HCT116 (cell line): ENCODE measurements at regions of chr1 and their contacts with region 1.

Region 1: DNA sequence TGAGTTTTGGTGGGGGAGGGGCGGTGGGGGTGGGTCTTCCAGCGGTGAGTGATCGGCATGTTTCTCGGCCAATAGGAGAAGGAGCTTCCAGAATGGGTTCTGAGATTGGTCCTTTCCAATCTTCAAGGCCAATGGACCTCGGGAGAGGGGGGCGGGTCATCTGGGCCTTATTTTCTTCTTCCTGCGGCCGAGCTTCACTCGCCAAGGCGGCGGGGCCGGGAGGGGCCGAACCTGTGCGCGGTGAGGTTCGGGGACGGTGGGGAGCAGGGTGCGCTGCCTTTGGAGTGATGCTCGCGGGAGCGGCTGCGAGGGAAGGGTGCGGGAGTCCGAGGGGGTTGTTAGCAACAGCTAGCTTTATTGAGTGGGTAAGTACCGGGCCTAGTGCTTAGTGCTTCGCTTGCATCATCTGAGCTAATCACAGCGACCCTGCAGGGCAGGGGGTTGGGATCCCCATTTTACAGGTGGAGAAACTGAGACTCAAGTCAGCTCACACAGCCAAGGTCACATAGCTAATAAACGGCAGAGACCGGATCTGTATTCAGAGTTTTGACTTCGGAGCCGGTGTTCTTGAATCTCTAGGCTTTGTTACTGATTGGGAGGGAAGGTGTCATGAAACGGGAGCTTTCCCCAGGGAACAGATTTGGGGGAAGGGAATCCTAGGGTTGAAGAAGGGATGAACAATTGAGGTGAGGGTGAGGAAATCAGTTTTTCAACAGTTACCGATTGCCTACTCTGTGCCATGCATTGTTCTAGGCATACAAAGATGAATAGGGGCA is 549 bp downstream of the KDM4A start:
- DNase-seq: peak; percentile 98
- ATAC-seq: peak; percentile 80
- H3K4me3 ChIP-seq: peak overlapping the region; percentile 62 to 86
- H3K27ac ChIP-seq: peak overlapping the region; percentile 83
- H3K4me1 ChIP-seq: peaks cover 7 to 26% of the 10 kb centered on the region in 2 experiments; a peak in 3 of 4 replicates
- H3K27me3 ChIP-seq: no peaks in the 10 kb centered on the region
- CTCF ChIP-seq: no peak
- POLR2A ChIP-seq: peak; percentile 99
- RAD21 ChIP-seq: no peak

Region 2: GRCh38 chr1:43529206-43529731 is 121.2 kb before region 1 on chr1:
- CTCF ChIA-PET with region 1: interaction called, 3 read pairs
- POLR2A ChIA-PET with region 1: interaction called, 8 read pairs
- RAD21 ChIA-PET with region 1: interaction called in 1 of 2 experiments, 3 read pairs
- intact Hi-C with region 1: loop called (anchors 2 kb)
- DNase-seq: peak; percentile 84
- ATAC-seq: peak; percentile 56
- H3K4me3 ChIP-seq: no peak overlapping the region
- H3K27ac ChIP-seq: no peak overlapping the region
- H3K4me1 ChIP-seq: peaks cover 26 to 71% of the 10 kb centered on the region in 2 experiments
- H3K27me3 ChIP-seq: no peaks in the 10 kb centered on the region
- CTCF ChIP-seq: peak in 2 of 3 experiments; percentile 94 to 97; a peak in 4 of 6 replicates
- POLR2A ChIP-seq: no peak
- RAD21 ChIP-seq: no peak

Region 3: DNA sequence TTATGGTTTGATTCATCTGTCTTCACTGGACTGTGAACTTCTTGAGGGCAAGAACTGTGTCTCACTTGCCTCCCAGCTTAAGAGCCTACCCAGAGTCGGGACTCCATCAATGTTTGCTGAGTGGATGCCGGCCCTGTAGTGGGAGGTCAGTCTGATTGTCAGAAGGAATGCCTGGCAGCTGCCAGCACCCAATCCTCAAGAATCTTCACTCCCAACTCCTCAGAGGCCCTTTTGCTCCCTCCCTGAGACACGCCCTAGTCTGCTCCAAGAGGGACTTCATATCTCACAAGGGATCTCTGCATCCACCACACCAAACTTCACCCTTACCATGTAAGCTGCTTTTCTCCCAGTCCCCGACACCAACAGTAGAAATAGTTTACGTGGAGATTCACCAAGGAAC is 15.8 kb before region 1 on chr1:
- CTCF ChIA-PET with region 1: interaction called, 3 read pairs
- POLR2A ChIA-PET with region 1: interaction called, 22 read pairs
- RAD21 ChIA-PET with region 1: no interaction called
- intact Hi-C with region 1: no loop called
- DNase-seq: no peak
- ATAC-seq: peak; percentile 73
- H3K4me3 ChIP-seq: no peak overlapping the region
- H3K27ac ChIP-seq: no peak overlapping the region
- H3K4me1 ChIP-seq: peaks cover 0 to 14% of the 10 kb centered on the region in 2 experiments; a peak in 1 of 4 replicates
- H3K27me3 ChIP-seq: no peaks in the 10 kb centered on the region
- CTCF ChIP-seq: no peak
- POLR2A ChIP-seq: no peak
- RAD21 ChIP-seq: no peak

Region 4: GRCh38 chr1:43639976-43640789 is 10.3 kb before region 1 on chr1:
- CTCF ChIA-PET with region 1: interaction called, 3 read pairs
- POLR2A ChIA-PET with region 1: interaction called, 22 read pairs
- RAD21 ChIA-PET with region 1: no interaction called
- intact Hi-C with region 1: no loop called
- DNase-seq: no peak
- ATAC-seq: peak; percentile 67
- H3K4me3 ChIP-seq: no peak overlapping the region
- H3K27ac ChIP-seq: no peak overlapping the region
- H3K4me1 ChIP-seq: peaks cover 22 to 57% of the 10 kb centered on the region in 2 experiments
- H3K27me3 ChIP-seq: no peaks in the 10 kb centered on the region
- CTCF ChIP-seq: peak in 1 of 3 experiments; percentile 21; a peak in 1 of 6 replicates
- POLR2A ChIP-seq: no peak
- RAD21 ChIP-seq: peak; percentile 55

Region 5: GRCh38 chr1:43729816-43730463 is 79.4 kb after region 1 on chr1:
- CTCF ChIA-PET with region 1: no interaction called
- POLR2A ChIA-PET with region 1: no interaction called
- RAD21 ChIA-PET with region 1: no interaction called
- intact Hi-C with region 1: no loop called
- DNase-seq: no peak
- ATAC-seq: no peak
- H3K4me3 ChIP-seq: no peak overlapping the region
- H3K27ac ChIP-seq: no peak overlapping the region
- H3K4me1 ChIP-seq: no peaks in the 10 kb centered on the region
- H3K27me3 ChIP-seq: no peaks in the 10 kb centered on the region
- CTCF ChIP-seq: no peak
- POLR2A ChIP-seq: no peak
- RAD21 ChIP-seq: no peak

Region 6: DNA sequence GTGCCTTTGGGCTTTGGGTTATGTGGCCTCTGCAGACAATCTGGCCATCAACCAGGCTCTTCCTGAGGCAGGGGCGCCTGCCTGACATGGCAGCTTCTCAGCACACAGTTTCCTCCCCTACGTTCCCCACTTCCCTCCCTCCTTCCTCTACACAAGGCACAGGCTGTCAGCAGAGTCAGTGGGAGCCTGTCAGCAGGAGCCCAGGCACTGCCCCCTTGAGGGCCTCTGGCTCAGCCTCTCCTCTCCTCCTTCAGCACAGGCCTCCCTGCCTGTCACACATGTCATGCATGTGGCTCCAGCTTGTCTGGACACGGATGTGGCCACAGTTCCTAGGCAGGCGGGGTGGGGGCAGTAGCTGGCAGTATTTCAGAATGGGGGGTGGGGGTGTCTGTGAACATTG is 230.9 kb after region 1 on chr1:
- CTCF ChIA-PET with region 1: no interaction called
- POLR2A ChIA-PET with region 1: no interaction called
- RAD21 ChIA-PET with region 1: no interaction called
- intact Hi-C with region 1: no loop called
- DNase-seq: no peak
- ATAC-seq: peak; percentile 26; the same call in 1 of the 2 replicates
- H3K4me3 ChIP-seq: no peak overlapping the region
- H3K27ac ChIP-seq: no peak overlapping the region
- H3K4me1 ChIP-seq: peaks cover 22 to 78% of the 10 kb centered on the region in 2 experiments
- H3K27me3 ChIP-seq: no peaks in the 10 kb centered on the region
- CTCF ChIP-seq: 0 out of 6 replicates have a peak, but pooled peaks of 1 of the 3 experiments have one; percentile 8
- POLR2A ChIP-seq: no peak
- RAD21 ChIP-seq: peak; percentile 15; the same call in 1 of the 2 replicates